Uterus (tissue), 4 donors: ENCODE measurements at regions of chr5 and their contacts with region 1.

Region 1: DNA sequence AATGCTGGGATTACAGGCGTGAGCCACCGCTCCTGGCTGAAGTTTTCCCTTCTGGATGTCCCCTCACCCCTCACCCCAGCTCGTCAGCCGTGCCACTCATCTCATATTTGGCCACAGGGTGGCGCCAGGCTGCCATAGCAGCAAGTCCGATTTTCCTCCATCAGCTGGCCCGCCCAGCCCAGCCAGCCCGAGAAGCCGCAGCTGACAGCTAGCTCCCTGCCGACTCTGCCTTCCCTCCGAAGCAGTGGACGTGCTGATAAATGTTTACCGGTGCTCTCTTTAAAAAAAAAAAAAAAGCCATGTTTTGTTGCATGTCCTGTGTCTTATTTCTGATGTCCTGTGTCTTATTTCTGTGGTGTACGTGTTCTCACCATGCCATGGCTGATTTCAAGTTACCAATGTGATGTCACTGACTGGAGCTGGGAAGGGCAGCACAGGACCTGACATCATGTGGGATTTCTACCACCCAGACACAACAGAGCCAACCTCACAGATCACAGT is 58.3 kb downstream of the PFDN1 start:
- DNase-seq: peak; percentile 86 to 92
- H3K4me3 ChIP-seq: no peak overlapping the region
- H3K27ac ChIP-seq: peak overlapping the region; percentile 65 to 67
- H3K4me1 ChIP-seq: peaks cover 6 to 16% of the 10 kb centered on the region in 2 donors
- H3K27me3 ChIP-seq: no peaks in the 10 kb centered on the region
- CTCF ChIP-seq: peak; percentile 90 to 95 (median 92)
- POLR2A ChIP-seq: no peak

Region 2: DNA sequence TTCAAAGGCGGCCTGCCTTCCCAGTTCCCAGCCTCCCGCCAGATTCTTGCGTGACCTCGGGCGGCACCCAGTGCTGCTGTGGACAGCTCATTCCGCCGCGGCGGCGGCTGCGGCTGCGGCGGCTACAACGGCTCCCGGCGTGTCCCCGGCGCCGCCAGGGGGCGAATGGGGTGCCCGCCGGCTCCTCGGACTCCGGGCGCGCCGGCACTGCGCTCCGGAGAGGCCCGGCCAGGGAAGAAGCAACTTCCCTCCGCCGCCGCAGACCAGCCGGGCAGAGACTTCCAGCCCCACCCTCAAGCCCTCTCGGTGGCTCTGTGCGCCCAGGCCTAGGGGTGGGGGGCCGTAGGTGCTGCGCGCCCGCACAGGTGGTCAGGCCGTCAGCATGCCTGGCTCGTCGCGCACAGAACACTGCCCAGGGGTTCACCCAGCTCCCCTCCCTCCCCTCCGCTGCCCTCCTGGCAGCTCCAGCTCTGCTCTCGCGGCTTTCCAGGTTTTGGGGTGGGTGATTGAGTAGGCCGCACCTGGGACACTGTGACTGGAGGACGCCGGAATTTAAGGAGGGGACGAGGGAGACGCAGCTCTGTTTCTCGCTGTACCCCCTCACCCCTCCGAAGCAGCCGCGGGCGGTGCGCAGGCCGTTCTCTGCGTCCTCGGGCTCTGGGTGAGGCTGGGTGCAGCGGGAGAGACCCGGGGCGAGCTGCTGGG is 98.6 kb before region 1 on chr5:
- intact Hi-C with region 1: no loop called
- DNase-seq: peak; percentile 54 to 78
- H3K4me3 ChIP-seq: peak overlapping the region; percentile 23 to 37
- H3K27ac ChIP-seq: no peak overlapping the region
- H3K4me1 ChIP-seq: peaks cover 0 to 12% of the 10 kb centered on the region in 2 donors
- H3K27me3 ChIP-seq: no peaks in the 10 kb centered on the region
- CTCF ChIP-seq: peak; percentile 38 to 88 (median 85)
- POLR2A ChIP-seq: peak in 1 of 2 donors; percentile 20

Region 3: GRCh38 chr5:140346348-140347101 is 102.0 kb after region 1 on chr5 and contains the start of gene HBEGF:
- intact Hi-C with region 1: loop called (anchors 5 kb)
- DNase-seq: peak; percentile 80 to 84
- H3K4me3 ChIP-seq: peak within 1 kb of the TSS; percentile 82 to 96
- H3K27ac ChIP-seq: peak within 1 kb of the TSS; percentile 84 to 88
- H3K4me1 ChIP-seq: peaks cover 0 to 3% of the 10 kb centered on the region in 2 donors
- H3K27me3 ChIP-seq: no peaks in the 10 kb centered on the region
- CTCF ChIP-seq: peak; percentile 11 to 59 (median 52)
- POLR2A ChIP-seq: peak; percentile 95 to 96
- total RNA-seq, gene HBEGF: 0.77 to 24.4 (median 8.4) TPM